CD8-positive, alpha-beta T cell (primary cell): ENCODE measurements at regions of chr3 and their contacts with region 1.

Region 1: DNA sequence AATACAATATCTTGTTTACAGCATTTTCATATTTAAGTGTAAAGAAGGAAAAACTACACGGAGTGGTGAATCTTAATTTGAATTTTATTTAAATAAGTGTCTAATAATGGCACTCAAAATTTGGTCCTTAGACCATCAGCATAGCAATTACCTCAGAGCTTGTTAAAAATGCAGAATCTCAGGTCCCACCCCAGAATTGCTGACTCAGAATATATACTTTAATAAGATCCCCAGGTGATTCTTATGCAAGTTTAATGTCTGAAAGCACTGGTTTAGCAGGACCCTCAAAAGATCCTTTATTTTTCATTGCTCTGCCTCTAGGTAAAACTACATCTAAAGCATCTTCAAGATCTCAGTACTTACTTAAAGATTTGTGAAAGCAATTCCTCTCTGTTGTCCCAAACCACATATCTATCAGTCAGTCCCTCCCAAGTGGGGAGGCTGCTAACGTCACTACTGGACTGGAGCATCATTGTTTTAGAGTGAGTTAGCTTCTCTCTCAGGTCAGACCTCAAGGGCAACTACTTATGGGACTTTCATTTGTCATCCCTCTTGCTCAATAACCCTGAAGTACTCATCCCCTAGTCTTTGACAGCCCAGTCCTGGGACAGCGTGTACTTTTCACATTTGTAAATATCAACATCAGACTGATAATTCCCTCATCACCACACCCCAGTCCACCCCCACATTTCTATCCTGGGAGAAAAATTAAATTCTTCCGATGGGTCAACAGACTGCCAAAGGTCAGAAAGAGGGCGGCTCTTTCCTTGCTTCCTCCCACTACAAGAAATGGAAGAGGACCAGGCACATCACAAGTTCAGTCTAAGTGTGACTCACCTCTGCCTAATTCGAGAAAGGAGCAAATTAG is 76.7 kb downstream of the CBLB start:
- DNase-seq: peak in 2 of 9 experiments; percentile 22 to 61
- ATAC-seq: no peak
- H3K4me3 ChIP-seq: no peak overlapping the region
- H3K4me3 Mint-ChIP-seq: no peak overlapping the region
- H3K27ac ChIP-seq: peak overlapping the region in 1 of 2 experiments; percentile 51
- H3K27ac Mint-ChIP-seq: peak overlapping the region; percentile 32
- H3K4me1 ChIP-seq: peaks cover 39% of the 10 kb centered on the region
- H3K4me1 Mint-ChIP-seq: peaks cover 73% of the 10 kb centered on the region
- H3K27me3 ChIP-seq: no peaks in the 10 kb centered on the region
- H3K27me3 Mint-ChIP-seq: no peaks in the 10 kb centered on the region
- CTCF ChIP-seq: no peak

Region 2: GRCh38 chr3:105780107-105780506 is 12.0 kb before region 1 on chr3:
- CTCF ChIA-PET with region 1: no interaction called
- POLR2A ChIA-PET with region 1: interaction called, 5 read pairs
- intact Hi-C with region 1: loop called in 1 of 2 experiments (anchors 1 kb)
- DNase-seq: no peak
- ATAC-seq: no peak
- H3K4me3 ChIP-seq: no peak overlapping the region
- H3K4me3 Mint-ChIP-seq: no peak overlapping the region
- H3K27ac ChIP-seq: no peak overlapping the region
- H3K27ac Mint-ChIP-seq: peak overlapping the region; percentile 53
- H3K4me1 ChIP-seq: peaks cover 36% of the 10 kb centered on the region
- H3K4me1 Mint-ChIP-seq: peaks cover 69% of the 10 kb centered on the region
- H3K27me3 ChIP-seq: no peaks in the 10 kb centered on the region
- H3K27me3 Mint-ChIP-seq: no peaks in the 10 kb centered on the region
- CTCF ChIP-seq: no peak

Region 3: DNA sequence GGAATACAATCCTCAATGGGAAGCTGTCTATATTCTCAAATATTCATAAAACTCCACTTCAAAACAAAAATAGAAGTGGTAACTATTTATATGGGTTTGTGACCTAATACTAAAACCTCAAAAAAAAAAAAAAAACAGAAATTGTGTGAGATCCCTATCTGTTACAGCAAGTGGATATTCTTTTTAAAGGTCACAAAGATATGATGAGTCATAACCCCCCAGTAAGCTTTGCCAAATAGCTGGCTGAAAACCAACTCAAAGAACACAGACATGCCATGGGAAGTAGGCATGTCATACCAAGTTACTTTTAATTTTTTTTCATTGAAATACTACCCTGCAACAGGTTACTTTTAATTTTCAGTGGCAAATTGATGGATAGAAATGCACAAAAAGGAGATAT is 14.2 kb after region 1 on chr3:
- CTCF ChIA-PET with region 1: no interaction called
- POLR2A ChIA-PET with region 1: no interaction called
- intact Hi-C with region 1: loop called in 1 of 2 experiments (anchors 1 kb)
- DNase-seq: peak in 4 of 9 experiments; percentile 25 to 83 (median 58)
- ATAC-seq: peak; percentile 90
- H3K4me3 ChIP-seq: no peak overlapping the region
- H3K4me3 Mint-ChIP-seq: no peak overlapping the region
- H3K27ac ChIP-seq: peak overlapping the region in 1 of 2 experiments; percentile 2
- H3K27ac Mint-ChIP-seq: peak overlapping the region; percentile 60
- H3K4me1 ChIP-seq: peaks cover 23% of the 10 kb centered on the region
- H3K4me1 Mint-ChIP-seq: peaks cover 73% of the 10 kb centered on the region
- H3K27me3 ChIP-seq: no peaks in the 10 kb centered on the region
- H3K27me3 Mint-ChIP-seq: no peaks in the 10 kb centered on the region
- CTCF ChIP-seq: no peak